Activated CD8-positive, alpha-beta T cell treated with anti-CD3 and anti-CD28 coated beads for 36 hours (primary cell): ENCODE measurements at regions of chr4 and their contacts with region 1.

Region 1: DNA sequence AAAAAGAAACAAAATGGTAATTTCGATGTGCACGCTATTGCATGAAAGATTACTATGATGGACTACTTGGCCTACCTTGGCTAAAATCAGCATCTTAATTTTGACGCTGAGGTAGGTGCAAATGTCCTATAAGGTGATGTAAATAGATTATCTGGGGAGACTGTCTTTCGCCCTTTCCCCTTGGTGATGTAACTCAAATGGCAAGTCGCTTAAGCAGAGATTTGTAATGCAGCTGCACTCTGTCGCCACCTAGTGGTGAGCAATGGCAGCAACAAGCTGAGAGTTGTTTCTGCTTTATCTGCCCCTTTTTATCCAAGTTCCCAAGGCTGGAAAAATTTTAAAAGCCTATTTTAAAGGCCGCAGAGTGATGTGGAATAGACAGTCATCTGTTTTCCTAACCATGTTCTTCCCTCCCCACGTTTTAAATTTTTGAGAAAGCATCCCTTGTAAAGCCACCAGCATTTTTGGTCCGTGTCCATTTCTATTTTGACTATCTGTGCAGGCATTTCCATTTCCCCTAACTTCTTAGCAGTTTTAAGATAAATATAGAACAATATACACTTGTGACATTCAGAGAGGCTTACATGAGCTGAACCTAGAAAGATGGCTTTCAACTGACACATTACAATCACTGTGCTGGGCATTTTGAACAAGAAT is 62.4 kb upstream of the PDLIM3 start:
- DNase-seq: peak; percentile 77
- ATAC-seq: peak; percentile 84
- H3K4me3 Mint-ChIP-seq: no peak overlapping the region
- H3K27ac Mint-ChIP-seq: no peak overlapping the region
- H3K4me1 Mint-ChIP-seq: no peaks in the 10 kb centered on the region
- H3K27me3 Mint-ChIP-seq: peaks cover 19% of the 10 kb centered on the region
- CTCF ChIP-seq: peak; percentile 91

Region 2: GRCh38 chr4:185425647-185426352 is 171.9 kb before region 1 on chr4 and contains the start of gene UFSP2:
- CTCF ChIA-PET with region 1: interaction called, 14 read pairs
- POLR2A ChIA-PET with region 1: interaction called, 4 read pairs
- intact Hi-C with region 1: no loop called
- DNase-seq: peak; percentile 87
- ATAC-seq: peak; percentile 91
- H3K4me3 Mint-ChIP-seq: peak within 1 kb of the TSS; percentile 83
- H3K27ac Mint-ChIP-seq: peak within 1 kb of the TSS; percentile 99
- H3K4me1 Mint-ChIP-seq: peaks cover 32% of the 10 kb centered on the region
- H3K27me3 Mint-ChIP-seq: peaks cover 3% of the 10 kb centered on the region
- CTCF ChIP-seq: no peak
- total RNA-seq, gene UFSP2: 32.0 to 36.1 TPM

Region 3: DNA sequence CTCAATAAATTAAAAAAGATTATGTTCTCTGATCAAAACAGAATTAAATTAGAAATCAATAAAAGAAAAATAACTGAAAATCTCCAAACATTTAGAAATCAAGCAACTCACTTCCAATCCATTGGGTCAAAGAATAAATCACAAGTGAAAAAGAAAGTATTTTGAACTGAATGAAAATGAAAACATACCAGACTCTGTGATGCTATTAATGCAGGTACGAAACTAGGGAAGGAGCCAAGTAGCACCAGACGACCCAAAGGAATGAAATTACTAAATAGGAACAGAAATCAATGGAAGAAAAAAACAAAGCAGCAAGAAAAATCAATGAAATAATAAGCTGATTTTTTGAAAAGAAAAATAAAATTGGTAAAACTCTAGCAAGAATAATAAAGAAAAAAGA is 141.5 kb before region 1 on chr4:
- CTCF ChIA-PET with region 1: no interaction called
- POLR2A ChIA-PET with region 1: no interaction called
- intact Hi-C with region 1: no loop called
- DNase-seq: no peak
- ATAC-seq: no peak
- H3K4me3 Mint-ChIP-seq: no peak overlapping the region
- H3K27ac Mint-ChIP-seq: no peak overlapping the region
- H3K4me1 Mint-ChIP-seq: no peaks in the 10 kb centered on the region
- H3K27me3 Mint-ChIP-seq: peaks cover 15% of the 10 kb centered on the region
- CTCF ChIP-seq: no peak

Region 4: GRCh38 chr4:185471235-185472102 is 126.2 kb before region 1 on chr4 and contains the start of gene CCDC110:
- CTCF ChIA-PET with region 1: interaction called, 9 read pairs
- POLR2A ChIA-PET with region 1: no interaction called
- intact Hi-C with region 1: loop called (anchors 5 kb)
- DNase-seq: peak; percentile 93
- ATAC-seq: peak; percentile 99
- H3K4me3 Mint-ChIP-seq: peak within 1 kb of the TSS; percentile 84
- H3K27ac Mint-ChIP-seq: no peak within 1 kb of the TSS
- H3K4me1 Mint-ChIP-seq: peaks cover 6% of the 10 kb centered on the region
- H3K27me3 Mint-ChIP-seq: peaks cover 16% of the 10 kb centered on the region
- CTCF ChIP-seq: peak; percentile 56
- total RNA-seq, gene CCDC110: 0.45 to 0.81 TPM

Region 5: DNA sequence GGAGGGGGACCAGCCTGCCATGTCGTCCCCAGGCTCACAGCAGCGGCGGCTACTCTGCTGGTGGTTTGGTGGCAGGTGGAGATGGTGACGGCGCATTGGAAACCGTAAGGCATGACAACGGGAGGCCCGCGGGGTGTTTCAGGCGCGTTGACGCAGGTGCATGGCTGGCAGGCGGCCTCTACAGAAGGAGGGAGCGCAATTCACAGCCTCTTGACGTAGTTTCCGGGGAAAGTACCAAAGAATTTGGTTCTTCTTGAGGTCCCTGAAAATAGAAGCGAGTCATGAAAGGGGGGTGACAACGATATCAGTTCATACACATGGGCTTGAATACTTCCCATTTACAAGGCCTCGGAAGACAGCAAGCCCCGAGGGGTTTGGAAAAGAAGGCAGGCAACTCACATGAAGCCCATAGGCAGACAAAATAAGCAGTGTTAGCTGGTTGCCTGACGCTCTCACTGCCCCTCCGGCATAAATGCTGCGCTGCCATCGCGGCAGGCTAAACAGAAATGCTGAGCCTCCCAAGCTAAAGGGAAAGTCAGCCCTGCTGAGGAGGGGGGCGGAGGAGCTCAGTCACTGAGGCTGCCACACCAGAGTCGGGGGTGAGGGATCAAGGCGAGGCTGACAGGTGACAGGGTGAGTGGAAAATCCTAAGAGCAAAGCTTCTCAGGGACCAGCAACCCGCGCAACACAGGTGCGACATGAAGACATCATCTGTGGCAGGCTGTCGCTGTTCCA is 10.1 kb before region 1 on chr4:
- CTCF ChIA-PET with region 1: interaction called, 55 read pairs
- POLR2A ChIA-PET with region 1: interaction called, 4 read pairs
- intact Hi-C with region 1: no loop called
- DNase-seq: peak; percentile 87
- ATAC-seq: peak; percentile 96
- H3K4me3 Mint-ChIP-seq: peak overlapping the region; percentile 48
- H3K27ac Mint-ChIP-seq: peak overlapping the region; percentile 60
- H3K4me1 Mint-ChIP-seq: peaks cover 13% of the 10 kb centered on the region
- H3K27me3 Mint-ChIP-seq: peaks cover 48% of the 10 kb centered on the region
- CTCF ChIP-seq: no peak

Region 6: DNA sequence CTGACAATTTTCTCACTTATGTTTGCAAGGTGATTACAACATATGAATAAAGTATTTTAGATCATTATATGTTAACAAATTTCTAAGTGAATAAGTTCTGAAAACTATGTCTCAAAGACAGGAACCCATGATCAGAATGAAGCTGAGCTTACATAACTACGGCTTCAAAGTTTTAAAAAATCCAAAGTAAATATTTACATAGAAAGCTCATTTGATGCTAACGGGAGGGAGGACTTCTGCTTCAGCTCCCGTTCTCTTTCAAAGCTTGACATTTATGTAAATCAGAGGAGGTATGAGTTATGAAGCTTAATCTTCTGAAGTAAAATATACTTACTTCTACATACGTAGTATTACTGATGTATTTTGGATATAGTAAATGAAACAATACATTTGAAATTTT is 10.5 kb after region 1 on chr4:
- CTCF ChIA-PET with region 1: interaction called, 49 read pairs
- POLR2A ChIA-PET with region 1: no interaction called
- intact Hi-C with region 1: no loop called
- DNase-seq: no peak
- ATAC-seq: no peak
- H3K4me3 Mint-ChIP-seq: no peak overlapping the region
- H3K27ac Mint-ChIP-seq: no peak overlapping the region
- H3K4me1 Mint-ChIP-seq: no peaks in the 10 kb centered on the region
- H3K27me3 Mint-ChIP-seq: peaks cover 6% of the 10 kb centered on the region
- CTCF ChIP-seq: no peak

Region 7: DNA sequence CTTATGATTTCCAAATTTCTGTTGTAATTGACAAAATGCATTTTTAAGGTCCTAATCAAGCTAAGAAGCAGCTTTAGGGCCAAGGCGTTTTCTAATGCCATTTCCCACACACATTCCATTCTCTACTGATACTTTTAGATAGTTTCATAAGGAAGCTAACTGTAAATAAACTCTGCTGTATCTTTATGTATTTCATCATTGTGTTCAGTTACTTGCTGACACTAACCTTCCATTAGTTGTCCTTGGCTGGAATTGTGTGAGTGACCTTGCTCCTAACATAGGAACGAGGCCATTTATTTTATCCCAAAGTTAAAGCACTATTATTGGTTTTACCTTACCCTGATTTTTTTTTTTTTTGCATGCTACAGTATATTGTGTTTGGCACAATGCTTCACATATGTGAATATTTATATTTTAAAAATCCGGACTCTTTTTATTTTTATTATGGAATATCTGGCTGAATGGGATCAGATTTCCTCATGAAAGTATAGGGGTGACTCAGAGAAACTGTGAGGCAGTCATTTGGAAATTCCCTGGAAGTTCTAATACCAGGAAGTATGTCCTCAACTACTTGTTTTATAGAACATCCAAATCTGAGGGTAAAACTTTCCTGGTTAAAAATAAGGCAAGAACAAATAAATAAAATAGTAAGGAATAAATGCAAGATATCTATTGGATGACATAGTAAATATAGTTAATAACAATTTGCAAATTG is 277.0 kb after region 1 on chr4:
- CTCF ChIA-PET with region 1: no interaction called
- POLR2A ChIA-PET with region 1: no interaction called
- intact Hi-C with region 1: no loop called
- DNase-seq: no peak
- ATAC-seq: no peak
- H3K4me3 Mint-ChIP-seq: no peak overlapping the region
- H3K27ac Mint-ChIP-seq: no peak overlapping the region
- H3K4me1 Mint-ChIP-seq: no peaks in the 10 kb centered on the region
- H3K27me3 Mint-ChIP-seq: no peaks in the 10 kb centered on the region
- CTCF ChIP-seq: no peak

Region 8: DNA sequence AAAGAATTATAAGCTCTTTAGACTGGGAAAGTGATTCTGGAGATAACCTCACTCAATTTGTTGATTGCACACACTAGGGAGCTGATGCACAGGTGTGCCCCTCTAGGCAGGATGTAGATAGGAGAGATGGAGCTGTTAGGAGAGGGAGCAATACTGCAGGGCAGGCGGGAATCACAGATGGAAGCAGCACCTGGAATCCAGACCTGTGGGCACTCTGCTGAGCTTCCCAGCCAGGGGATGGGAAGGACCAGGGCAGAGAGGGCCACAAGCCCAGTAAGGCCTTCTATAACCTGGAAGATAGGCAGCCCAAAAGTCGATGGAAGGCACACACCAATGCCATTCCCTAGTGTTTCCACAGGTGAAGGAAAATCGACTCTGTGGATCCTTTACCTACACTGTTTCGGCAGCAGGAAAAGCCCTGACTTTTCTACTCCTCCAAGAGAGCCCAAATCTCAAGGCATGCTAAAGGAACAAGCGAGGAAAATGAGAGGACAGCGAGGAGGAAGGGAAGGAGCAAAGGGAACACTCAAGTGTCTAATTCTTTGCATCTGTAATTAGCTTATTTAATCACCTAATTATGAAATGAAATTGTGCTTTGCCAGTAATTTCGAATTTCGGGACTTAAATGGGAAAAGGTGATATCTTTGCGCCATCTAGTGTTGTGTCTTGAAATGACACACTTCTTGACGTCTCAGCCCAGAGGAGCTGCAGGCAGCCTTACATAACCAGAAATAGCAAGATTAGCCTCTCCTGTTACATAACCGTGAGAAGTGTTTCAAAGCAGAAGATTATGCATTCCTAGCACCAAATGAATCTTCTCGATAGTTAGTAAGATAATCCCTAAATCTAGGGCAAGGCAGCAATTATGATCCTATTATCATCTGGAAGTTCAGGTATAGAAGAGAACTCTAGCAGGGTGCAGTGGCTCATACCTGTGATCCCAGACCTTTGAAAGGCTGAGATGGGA is 440.3 kb after region 1 on chr4:
- CTCF ChIA-PET with region 1: interaction called, 12 read pairs
- POLR2A ChIA-PET with region 1: no interaction called
- intact Hi-C with region 1: no loop called
- DNase-seq: peak; percentile 37
- ATAC-seq: peak; percentile 42
- H3K4me3 Mint-ChIP-seq: no peak overlapping the region
- H3K27ac Mint-ChIP-seq: no peak overlapping the region
- H3K4me1 Mint-ChIP-seq: no peaks in the 10 kb centered on the region
- H3K27me3 Mint-ChIP-seq: peaks cover 28% of the 10 kb centered on the region
- CTCF ChIP-seq: peak; percentile 81